A673 (cell line): ENCODE measurements at regions of chr17 and their contacts with region 1.

Region 1: GRCh38 chr17:64306850-64307463 is 43.9 kb upstream of the TEX2 start:
- DNase-seq: peak; percentile 79
- H3K4me3 ChIP-seq: no peak overlapping the region
- H3K27ac ChIP-seq: no peak overlapping the region
- H3K4me1 ChIP-seq: no peaks in the 10 kb centered on the region
- H3K27me3 ChIP-seq: no peaks in the 10 kb centered on the region
- CTCF ChIP-seq: peak; percentile 87

Region 2: GRCh38 chr17:66301797-66302741 is 1995.1 kb after region 1 on chr17 and contains the start of gene PRKCA:
- CTCF ChIA-PET with region 1: interaction called, 13 read pairs
- POLR2A ChIA-PET with region 1: no interaction called
- intact Hi-C with region 1: no loop called
- DNase-seq: peak; percentile 84
- H3K4me3 ChIP-seq: peak within 1 kb of the TSS; percentile 74
- H3K27ac ChIP-seq: peak within 1 kb of the TSS; percentile 44
- H3K4me1 ChIP-seq: peaks cover 6% of the 10 kb centered on the region
- H3K27me3 ChIP-seq: no peaks in the 10 kb centered on the region
- CTCF ChIP-seq: no peak
- total RNA-seq, gene PRKCA: 15.7 and 16.3 TPM in 2 replicates